ENCODE measurements at regions of chr19 and their contacts with region 1.

Region 1: GRCh38 chr19:10936661-10937084 is 8.1 kb downstream of the TIMM29 start:
- DNase-seq: peak; percentile 68
- CTCF ChIP-seq: peak; percentile 58

Region 2: DNA sequence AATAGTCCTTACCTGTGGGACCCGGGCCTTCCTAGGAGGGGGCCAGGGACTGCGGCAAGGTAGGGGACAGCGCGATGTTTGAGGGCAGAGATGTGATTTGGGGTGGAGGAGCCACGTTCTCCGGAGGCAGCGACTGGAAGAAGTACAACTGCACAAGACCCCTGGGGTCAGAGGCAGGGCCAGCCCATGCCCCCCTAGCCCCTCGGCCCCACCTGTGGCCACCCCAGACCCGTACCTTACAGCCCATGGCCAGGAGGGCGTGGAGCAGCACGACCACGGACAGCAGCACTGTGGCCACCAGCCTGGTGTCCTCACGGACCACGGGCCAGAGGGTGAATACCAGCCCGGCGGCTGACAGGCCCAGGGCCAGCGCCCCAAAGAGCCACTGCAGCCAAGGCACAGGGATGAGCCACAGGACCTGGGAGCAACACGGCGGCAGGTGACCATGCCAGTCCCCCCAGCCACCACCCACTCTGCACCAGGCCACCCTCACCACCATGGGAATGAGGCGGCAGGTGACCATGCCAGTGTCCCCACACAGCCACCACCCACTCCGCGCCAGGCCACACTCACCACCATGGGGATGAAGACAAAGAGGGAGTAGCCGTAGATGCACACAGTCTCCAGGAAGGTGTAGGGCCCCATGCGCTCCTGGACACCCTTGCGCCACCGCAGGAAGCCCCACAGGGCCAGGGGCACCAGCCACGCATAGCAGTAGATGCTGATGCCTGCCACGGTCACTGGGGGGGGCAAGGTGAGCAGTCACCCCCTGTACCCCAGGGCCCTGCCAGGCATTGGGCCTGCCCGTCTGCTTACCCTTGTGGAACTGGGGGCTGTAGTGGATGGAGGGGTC is 13.2 kb before region 1 on chr19:
- CTCF ChIA-PET with region 1: interaction called, 16 read pairs
- POLR2A ChIA-PET with region 1: no interaction called
- DNase-seq: no peak
- CTCF ChIP-seq: no peak

Region 3: DNA sequence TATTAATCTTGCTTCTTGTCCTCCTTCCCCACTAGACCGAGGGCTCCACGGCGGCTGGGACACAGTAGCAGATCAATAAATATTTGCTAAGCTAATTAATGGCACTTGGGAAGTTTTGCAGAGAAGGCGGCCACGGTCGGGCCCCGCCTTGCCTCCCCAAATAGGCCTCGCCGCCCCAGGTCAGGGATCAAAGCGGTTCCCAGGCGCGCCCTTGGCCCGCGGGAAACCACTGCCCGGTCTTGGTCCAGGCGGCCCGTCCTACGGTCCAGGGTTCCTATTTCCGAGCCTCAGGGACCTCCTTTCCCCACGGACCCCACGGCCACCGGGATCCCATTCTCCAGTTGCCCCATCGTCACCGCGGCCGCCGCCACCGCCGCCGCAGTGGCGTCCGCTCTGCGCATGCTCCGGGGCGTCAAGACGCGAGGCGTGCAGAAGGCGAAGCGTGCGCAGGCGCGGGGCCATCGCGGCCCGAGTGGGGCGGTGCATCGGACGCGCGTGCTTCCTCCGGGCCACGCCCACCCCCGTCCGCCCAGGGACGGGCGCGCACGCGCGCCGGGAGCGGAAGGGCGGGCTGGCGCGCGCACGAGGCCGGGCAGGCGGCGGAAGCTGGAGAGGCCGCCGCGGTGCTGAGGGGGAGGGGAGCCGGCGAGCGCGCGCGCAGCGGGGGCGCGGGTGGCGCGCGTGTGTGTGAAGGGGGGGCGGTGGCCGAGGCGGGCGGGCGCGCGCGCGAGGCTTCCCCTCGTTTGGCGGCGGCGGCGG is 23.8 kb after region 1 on chr19 and contains the start of gene SMARCA4:
- CTCF ChIA-PET with region 1: interaction called, 25 read pairs
- POLR2A ChIA-PET with region 1: no interaction called
- DNase-seq: peak; percentile 99
- CTCF ChIP-seq: no peak

Region 4: GRCh38 chr19:11011668-11012067 is 75.0 kb after region 1 on chr19:
- CTCF ChIA-PET with region 1: interaction called, 15 read pairs
- POLR2A ChIA-PET with region 1: no interaction called
- DNase-seq: no peak
- CTCF ChIP-seq: no peak

Region 5: GRCh38 chr19:11125994-11126685 is 189.5 kb after region 1 on chr19:
- CTCF ChIA-PET with region 1: interaction called, 17 read pairs
- POLR2A ChIA-PET with region 1: no interaction called
- DNase-seq: peak; percentile 77
- CTCF ChIP-seq: peak; percentile 82

Measured in GM10248 (cell line).